HepG2 (cell line): ENCODE measurements at regions of chr15 and their contacts with region 1.

Region 1: DNA sequence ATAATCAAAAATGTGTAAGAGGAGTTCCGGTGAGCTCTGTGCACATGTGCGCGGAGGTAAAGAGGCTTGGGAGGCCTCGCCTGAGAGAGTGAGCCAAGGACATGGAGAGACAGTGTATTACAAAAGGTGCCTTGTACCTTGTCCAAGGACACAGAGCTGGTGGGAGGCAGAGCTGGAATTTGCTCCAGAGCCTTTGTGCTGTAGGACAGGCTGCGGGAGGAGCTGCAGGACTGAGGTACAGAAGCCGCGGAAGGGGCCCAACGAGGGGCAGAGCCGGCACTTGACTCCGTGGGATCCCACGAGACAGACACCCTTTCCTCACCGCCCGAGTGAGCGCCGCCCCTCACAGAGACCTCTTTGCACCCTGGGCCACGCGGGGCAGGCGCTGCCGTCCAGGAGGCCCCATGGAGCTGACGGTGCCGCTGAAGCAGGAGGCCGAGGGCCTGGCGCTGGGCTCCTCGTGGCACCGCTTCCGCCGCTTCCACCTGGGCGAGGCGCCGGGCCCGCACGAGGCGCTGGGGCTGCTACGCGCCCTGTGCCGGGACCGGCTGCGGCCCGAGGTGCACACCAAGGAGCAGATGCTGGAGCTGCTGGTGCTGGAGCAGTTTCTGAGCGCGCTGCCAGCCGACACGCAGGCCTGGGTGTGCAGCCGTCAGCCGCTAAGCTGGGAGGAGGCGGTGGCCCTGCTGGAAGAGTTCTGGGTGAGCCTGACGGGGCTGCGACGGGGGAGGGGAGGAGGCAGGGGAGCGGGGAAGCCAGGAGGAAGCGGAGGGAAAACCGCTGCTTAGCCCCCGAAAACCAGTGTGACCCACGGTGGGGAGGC is 68.7 kb downstream of the SLTM start:
- DNase-seq: peak; percentile 95
- ATAC-seq: peak; percentile 89
- H3K4me3 ChIP-seq: peak overlapping the region; percentile 80 to 86 (median 82); a peak in 5 of 6 replicates
- H3K27ac ChIP-seq: peak overlapping the region; percentile 98
- H3K4me1 ChIP-seq: peaks cover 34% of the 10 kb centered on the region
- H3K27me3 ChIP-seq: no peaks in the 10 kb centered on the region; a peak in 1 of 5 replicates
- CTCF ChIP-seq: peak; percentile 63
- EP300 ChIP-seq: peak; percentile 43 to 66; a peak in 2 of 4 replicates
- POLR2A ChIP-seq: peak; percentile 81 to 94
- RAD21 ChIP-seq: peak; percentile 71

Region 2: GRCh38 chr15:58749532-58750337 is 115.1 kb before region 1 on chr15 and contains the start of gene ADAM10:
- CTCF ChIA-PET with region 1: no interaction called
- POLR2A ChIA-PET with region 1: interaction called, 15 read pairs
- in situ Hi-C with region 1: no loop called
- intact Hi-C with region 1: no loop called
- DNase-seq: peak; percentile 95
- ATAC-seq: peak; percentile 96
- H3K4me3 ChIP-seq: peak within 1 kb of the TSS; percentile 91 to 99 (median 95)
- H3K27ac ChIP-seq: peak within 1 kb of the TSS; percentile 97
- H3K4me1 ChIP-seq: peaks cover 32% of the 10 kb centered on the region
- H3K27me3 ChIP-seq: no peaks in the 10 kb centered on the region; a peak in 1 of 5 replicates
- CTCF ChIP-seq: peak; percentile 21; the same call in 1 of the 2 replicates
- EP300 ChIP-seq: no peak
- POLR2A ChIP-seq: peak; percentile 66 to 83
- RAD21 ChIP-seq: no peak
- total RNA-seq, gene ADAM10: 86.8 and 125 TPM in 2 replicates

Region 3: GRCh38 chr15:58852347-58852746 is 12.5 kb before region 1 on chr15:
- CTCF ChIA-PET with region 1: no interaction called
- POLR2A ChIA-PET with region 1: interaction called, 16 read pairs
- in situ Hi-C with region 1: no loop called
- intact Hi-C with region 1: no loop called
- DNase-seq: peak; percentile 42
- ATAC-seq: peak; percentile 59
- H3K4me3 ChIP-seq: no peak overlapping the region
- H3K27ac ChIP-seq: no peak overlapping the region
- H3K4me1 ChIP-seq: peaks cover 4% of the 10 kb centered on the region; the same call in 1 of the 2 replicates
- H3K27me3 ChIP-seq: no peaks in the 10 kb centered on the region
- CTCF ChIP-seq: peak; percentile 29
- EP300 ChIP-seq: no peak
- POLR2A ChIP-seq: no peak
- RAD21 ChIP-seq: 0 out of 2 replicates have a peak, but pooled peaks have one; percentile 15

Region 4: GRCh38 chr15:58875343-58875742 is 10.5 kb after region 1 on chr15:
- CTCF ChIA-PET with region 1: no interaction called
- POLR2A ChIA-PET with region 1: interaction called, 13 read pairs
- in situ Hi-C with region 1: no loop called
- intact Hi-C with region 1: no loop called
- DNase-seq: no peak
- ATAC-seq: peak; percentile 12; the same call in 1 of the 3 replicates
- H3K4me3 ChIP-seq: no peak overlapping the region
- H3K27ac ChIP-seq: no peak overlapping the region
- H3K4me1 ChIP-seq: peaks cover 10% of the 10 kb centered on the region
- H3K27me3 ChIP-seq: no peaks in the 10 kb centered on the region
- CTCF ChIP-seq: no peak
- EP300 ChIP-seq: no peak
- POLR2A ChIP-seq: peak in 1 of 2 experiments; percentile 25; a peak in 1 of 4 replicates
- RAD21 ChIP-seq: no peak

Region 5: DNA sequence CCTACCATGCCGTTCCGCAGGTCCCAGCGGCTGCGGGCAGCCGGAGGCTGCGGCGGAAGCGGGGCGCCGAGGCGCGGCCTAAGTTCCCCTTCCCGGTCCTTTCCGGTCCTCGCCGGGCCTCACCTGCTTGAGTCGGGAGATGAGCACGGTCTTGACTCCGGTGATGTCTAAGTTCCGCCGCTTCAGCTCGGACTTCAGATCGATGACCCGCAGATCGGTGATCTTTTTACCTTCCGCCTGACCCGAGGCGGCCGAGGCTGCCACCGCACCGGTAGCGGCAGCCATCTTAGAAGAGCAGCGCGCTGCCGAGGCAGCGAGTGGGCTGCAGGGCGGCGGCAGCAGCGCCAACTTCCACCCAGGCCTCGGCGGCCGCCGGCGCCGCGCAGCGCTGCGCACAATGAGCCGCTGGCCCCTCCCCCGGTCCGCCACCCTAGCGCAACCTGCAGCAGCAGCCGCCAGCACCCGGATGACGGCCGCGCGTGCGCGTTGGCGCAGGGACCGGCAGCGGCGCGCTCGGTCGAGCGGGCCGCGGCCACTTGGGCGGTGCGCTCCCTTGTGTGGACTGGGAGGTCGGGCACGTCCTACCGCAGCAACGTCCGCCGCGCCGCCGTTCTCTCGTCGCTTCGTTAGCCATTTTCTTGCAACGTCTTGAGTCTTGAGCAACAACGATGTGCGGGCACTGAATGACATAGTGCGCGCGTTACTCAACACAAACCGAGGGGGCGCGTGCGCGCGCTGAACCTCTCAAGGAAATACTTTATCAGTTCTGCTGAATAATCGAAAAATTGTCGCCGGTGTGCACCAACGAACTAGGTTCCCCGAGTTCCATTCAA is 68.7 kb after region 1 on chr15 and contains the start of gene SLTM:
- CTCF ChIA-PET with region 1: no interaction called
- POLR2A ChIA-PET with region 1: interaction called, 7 read pairs
- in situ Hi-C with region 1: no loop called
- intact Hi-C with region 1: loop called (anchors 5 kb)
- DNase-seq: peak; percentile 87
- ATAC-seq: peak; percentile 97
- H3K4me3 ChIP-seq: peak within 1 kb of the TSS; percentile 76 to 100 (median 94)
- H3K27ac ChIP-seq: peak within 1 kb of the TSS; percentile 99
- H3K4me1 ChIP-seq: peaks cover 25% of the 10 kb centered on the region
- H3K27me3 ChIP-seq: no peaks in the 10 kb centered on the region; a peak in 1 of 5 replicates
- CTCF ChIP-seq: no peak
- EP300 ChIP-seq: no peak; a peak in 1 of 4 replicates
- POLR2A ChIP-seq: peak; percentile 92 to 98
- RAD21 ChIP-seq: 0 out of 2 replicates have a peak, but pooled peaks have one; percentile 31
- total RNA-seq, gene SLTM: 58.0 and 64.2 TPM in 2 replicates